ENCODE measurements at regions of chr6 and their contacts with region 1.

Region 1: GRCh38 chr6:129661536-129662405 is 48.2 kb downstream of the ARHGAP18 start:
- DNase-seq: no peak
- H3K4me3 ChIP-seq: no peak overlapping the region
- H3K27ac ChIP-seq: no peak overlapping the region
- H3K27me3 ChIP-seq: no peaks in the 10 kb centered on the region
- CTCF ChIP-seq: no peak

Region 2: GRCh38 chr6:129646642-129647041 is 15.1 kb before region 1 on chr6:
- CTCF ChIA-PET with region 1: no interaction called
- POLR2A ChIA-PET with region 1: interaction called, 10 read pairs
- DNase-seq: no peak
- H3K4me3 ChIP-seq: no peak overlapping the region
- H3K27ac ChIP-seq: no peak overlapping the region
- H3K27me3 ChIP-seq: no peaks in the 10 kb centered on the region
- CTCF ChIP-seq: no peak